ENCODE measurements at regions of chr19 and their contacts with region 1.

Region 1: GRCh38 chr19:10946964-10947657 is 13.7 kb upstream of the SMARCA4 start:
- DNase-seq: no peak
- ATAC-seq: no peak
- H3K4me3 Mint-ChIP-seq: no peak overlapping the region
- H3K27ac Mint-ChIP-seq: no peak overlapping the region
- H3K4me1 Mint-ChIP-seq: peaks cover 1% of the 10 kb centered on the region
- H3K27me3 Mint-ChIP-seq: no peaks in the 10 kb centered on the region
- CTCF ChIP-seq: no peak

Region 2: GRCh38 chr19:10979951-10980381 is 32.9 kb after region 1 on chr19:
- CTCF ChIA-PET with region 1: no interaction called
- POLR2A ChIA-PET with region 1: no interaction called
- intact Hi-C with region 1: loop called (anchors 1 kb)
- DNase-seq: no peak
- ATAC-seq: peak; percentile 81
- H3K4me3 Mint-ChIP-seq: peak overlapping the region; percentile 33
- H3K27ac Mint-ChIP-seq: no peak overlapping the region
- H3K4me1 Mint-ChIP-seq: peaks cover 26% of the 10 kb centered on the region
- H3K27me3 Mint-ChIP-seq: no peaks in the 10 kb centered on the region
- CTCF ChIP-seq: no peak

Region 3: DNA sequence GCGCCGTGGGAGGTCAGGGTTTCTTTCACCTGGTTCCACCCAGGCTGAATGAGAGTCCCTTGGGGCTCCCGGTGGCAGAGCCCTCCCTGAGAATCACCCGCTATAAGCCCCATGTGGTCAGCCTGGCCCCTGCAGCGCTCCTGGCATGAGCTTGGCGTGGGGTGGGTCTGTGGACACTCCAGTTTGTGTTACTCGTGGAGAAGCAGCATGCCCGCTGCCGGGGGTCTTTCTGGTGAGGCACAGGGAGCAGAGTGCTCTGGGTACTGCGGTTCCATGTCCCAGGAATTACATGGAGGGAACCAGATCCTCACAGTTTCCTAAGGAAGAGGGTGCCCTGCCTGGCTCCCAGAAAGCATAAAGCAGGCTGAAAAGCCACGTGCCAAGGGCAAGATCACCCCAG is 75.9 kb after region 1 on chr19:
- CTCF ChIA-PET with region 1: no interaction called
- POLR2A ChIA-PET with region 1: interaction called, 11 read pairs
- intact Hi-C with region 1: no loop called
- DNase-seq: no peak
- ATAC-seq: no peak
- H3K4me3 Mint-ChIP-seq: no peak overlapping the region
- H3K27ac Mint-ChIP-seq: no peak overlapping the region
- H3K4me1 Mint-ChIP-seq: no peaks in the 10 kb centered on the region
- H3K27me3 Mint-ChIP-seq: no peaks in the 10 kb centered on the region
- CTCF ChIP-seq: no peak

Region 4: GRCh38 chr19:11125994-11126685 is 179.0 kb after region 1 on chr19:
- CTCF ChIA-PET with region 1: interaction called, 9 read pairs
- POLR2A ChIA-PET with region 1: no interaction called
- intact Hi-C with region 1: loop called (anchors 1 kb)
- DNase-seq: peak; percentile 54
- ATAC-seq: peak; percentile 63
- H3K4me3 Mint-ChIP-seq: no peak overlapping the region
- H3K27ac Mint-ChIP-seq: no peak overlapping the region
- H3K4me1 Mint-ChIP-seq: peaks cover 7% of the 10 kb centered on the region
- H3K27me3 Mint-ChIP-seq: no peaks in the 10 kb centered on the region
- CTCF ChIP-seq: peak; percentile 56

Measured in activated B cell treated with CpG ODN at 0.5 μM for 24 hours (primary cell).